GM12878 (cell line): ENCODE measurements at regions of chr4 and their contacts with region 1.

Region 1: GRCh38 chr4:15756361-15756861 is 21.7 kb upstream of the CD38 start:
- DNase-seq: peak; percentile 66
- ATAC-seq: peak; percentile 95
- H3K4me3 ChIP-seq: 0 out of 2 replicates have a peak overlapping the region, but pooled peaks have one; percentile 18
- H3K27ac ChIP-seq: no peak overlapping the region
- H3K4me1 ChIP-seq: peaks cover 18% of the 10 kb centered on the region
- H3K27me3 ChIP-seq: no peaks in the 10 kb centered on the region
- CTCF ChIP-seq: peak; percentile 35 to 67 (median 58); a peak in 5 of 6 replicates
- EP300 ChIP-seq: no peak
- POLR2A ChIP-seq: no peak
- RAD21 ChIP-seq: 0 out of 2 replicates have a peak, but pooled peaks have one; percentile 9

Region 2: DNA sequence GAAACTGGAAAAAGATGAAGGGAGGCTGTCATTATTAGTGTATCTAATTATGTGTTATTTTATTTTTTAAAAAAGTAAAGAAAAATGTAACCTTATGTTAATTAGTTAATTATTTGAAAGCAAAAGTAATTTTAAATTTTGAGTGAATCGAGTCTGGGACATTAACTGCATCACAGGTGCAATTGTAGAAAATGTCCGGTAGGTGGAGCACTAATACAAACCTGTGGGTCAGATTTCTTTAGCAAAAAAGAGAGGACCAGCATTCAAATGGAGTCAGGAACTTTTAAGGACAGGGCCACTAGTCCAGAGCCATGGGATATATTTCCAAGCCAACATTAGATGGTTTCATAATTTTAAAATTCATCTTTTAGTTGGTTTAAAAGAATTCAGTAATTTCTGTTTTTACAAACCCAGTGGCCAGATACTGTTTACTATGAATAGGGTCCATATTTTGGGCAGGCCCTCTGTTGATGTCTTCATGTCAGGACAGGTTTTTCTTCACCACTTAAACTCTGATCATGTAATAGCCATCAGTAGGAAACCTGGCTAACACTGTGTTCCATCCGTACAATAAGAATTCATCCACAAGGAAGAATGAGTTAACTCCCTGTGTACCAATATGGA is 26.4 kb before region 1 on chr4:
- CTCF ChIA-PET with region 1: interaction called, 22 read pairs
- POLR2A ChIA-PET with region 1: no interaction called
- RAD21 ChIA-PET with region 1: interaction called, 3 read pairs
- SMC1A ChIA-PET with region 1: interaction called, 7 read pairs
- in situ Hi-C with region 1: no loop called
- intact Hi-C with region 1: no loop called
- DNase-seq: peak; percentile 2
- ATAC-seq: peak; percentile 84
- H3K4me3 ChIP-seq: no peak overlapping the region
- H3K27ac ChIP-seq: no peak overlapping the region
- H3K4me1 ChIP-seq: no peaks in the 10 kb centered on the region
- H3K27me3 ChIP-seq: no peaks in the 10 kb centered on the region; a peak in 1 of 4 replicates
- CTCF ChIP-seq: peak; percentile 69 to 77 (median 74)
- EP300 ChIP-seq: no peak
- POLR2A ChIP-seq: no peak
- RAD21 ChIP-seq: peak; percentile 92

Region 3: DNA sequence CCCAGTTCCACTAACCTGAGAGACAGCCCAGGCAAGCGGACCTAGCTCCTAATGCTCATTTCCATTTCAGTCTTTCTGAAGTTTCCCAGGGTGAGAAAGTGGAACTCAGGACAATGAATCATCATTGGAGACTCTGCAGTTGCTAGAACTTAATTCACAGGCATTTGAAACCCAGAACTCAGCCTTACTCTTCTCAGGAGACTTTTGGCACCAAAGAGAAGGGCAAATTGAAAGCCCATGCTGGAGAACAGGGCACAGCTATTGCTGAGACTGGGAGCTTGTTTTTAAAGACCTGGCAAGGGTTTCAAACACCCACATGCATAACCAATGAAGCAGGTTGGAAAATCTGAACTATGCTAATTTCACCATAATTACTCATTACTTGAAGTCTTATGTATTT is 17.5 kb before region 1 on chr4:
- CTCF ChIA-PET with region 1: interaction called, 33 read pairs
- POLR2A ChIA-PET with region 1: no interaction called
- RAD21 ChIA-PET with region 1: interaction called, 16 read pairs
- SMC1A ChIA-PET with region 1: interaction called, 29 read pairs
- in situ Hi-C with region 1: no loop called
- intact Hi-C with region 1: no loop called
- DNase-seq: no peak
- ATAC-seq: no peak
- H3K4me3 ChIP-seq: no peak overlapping the region
- H3K27ac ChIP-seq: no peak overlapping the region
- H3K4me1 ChIP-seq: no peaks in the 10 kb centered on the region
- H3K27me3 ChIP-seq: no peaks in the 10 kb centered on the region; a peak in 1 of 4 replicates
- CTCF ChIP-seq: no peak
- EP300 ChIP-seq: no peak
- POLR2A ChIP-seq: no peak
- RAD21 ChIP-seq: no peak

Region 4: GRCh38 chr4:15771216-15772058 is 15.0 kb after region 1 on chr4:
- CTCF ChIA-PET with region 1: interaction called, 34 read pairs
- POLR2A ChIA-PET with region 1: interaction called, 19 read pairs
- RAD21 ChIA-PET with region 1: interaction called, 30 read pairs
- SMC1A ChIA-PET with region 1: interaction called, 83 read pairs
- in situ Hi-C with region 1: no loop called
- intact Hi-C with region 1: no loop called
- DNase-seq: peak; percentile 65
- ATAC-seq: peak; percentile 90
- H3K4me3 ChIP-seq: peak overlapping the region; percentile 30; the same call in 1 of the 2 replicates
- H3K27ac ChIP-seq: peak overlapping the region; percentile 48
- H3K4me1 ChIP-seq: peaks cover 37% of the 10 kb centered on the region
- H3K27me3 ChIP-seq: peaks cover 0 to 3% of the 10 kb centered on the region in 2 experiments; a peak in 1 of 4 replicates
- CTCF ChIP-seq: no peak
- EP300 ChIP-seq: peak; percentile 70 to 74; a peak in 2 of 4 replicates
- POLR2A ChIP-seq: no peak
- RAD21 ChIP-seq: no peak

Region 5: DNA sequence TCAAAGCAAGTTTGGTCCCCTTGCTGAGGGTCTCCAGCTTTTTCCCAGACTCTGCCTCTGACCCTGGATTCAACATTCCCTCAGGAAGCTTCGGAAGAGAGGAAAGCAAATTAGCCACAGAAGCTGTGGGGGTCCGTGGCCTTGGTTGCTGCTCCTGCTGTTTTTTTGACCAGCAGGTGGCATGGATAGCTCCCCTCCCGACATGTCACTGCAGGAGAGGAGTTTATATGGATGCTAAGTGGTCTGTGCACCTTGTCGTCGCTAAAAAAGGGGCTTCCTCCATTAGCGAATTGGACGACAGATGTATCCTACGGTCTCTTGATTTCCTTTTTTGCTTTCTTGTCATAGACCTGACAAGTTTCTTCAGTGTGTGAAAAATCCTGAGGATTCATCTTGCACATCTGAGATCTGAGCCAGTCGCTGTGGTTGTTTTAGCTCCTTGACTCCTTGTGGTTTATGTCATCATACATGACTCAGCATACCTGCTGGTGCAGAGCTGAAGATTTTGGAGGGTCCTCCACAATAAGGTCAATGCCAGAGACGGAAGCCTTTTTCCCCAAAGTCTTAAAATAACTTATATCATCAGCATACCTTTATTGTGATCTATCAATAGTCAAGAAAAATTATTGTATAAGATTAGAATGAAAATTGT is 91.9 kb after region 1 on chr4:
- CTCF ChIA-PET with region 1: no interaction called
- POLR2A ChIA-PET with region 1: no interaction called
- RAD21 ChIA-PET with region 1: no interaction called
- SMC1A ChIA-PET with region 1: no interaction called
- in situ Hi-C with region 1: no loop called
- intact Hi-C with region 1: no loop called
- DNase-seq: no peak
- ATAC-seq: no peak
- H3K4me3 ChIP-seq: no peak overlapping the region
- H3K27ac ChIP-seq: no peak overlapping the region
- H3K4me1 ChIP-seq: no peaks in the 10 kb centered on the region
- H3K27me3 ChIP-seq: no peaks in the 10 kb centered on the region
- CTCF ChIP-seq: no peak
- EP300 ChIP-seq: no peak
- POLR2A ChIP-seq: no peak
- RAD21 ChIP-seq: no peak

Region 6: GRCh38 chr4:16302619-16303018 is 546.2 kb after region 1 on chr4:
- CTCF ChIA-PET with region 1: no interaction called
- POLR2A ChIA-PET with region 1: no interaction called
- RAD21 ChIA-PET with region 1: no interaction called
- SMC1A ChIA-PET with region 1: no interaction called
- in situ Hi-C with region 1: no loop called
- intact Hi-C with region 1: no loop called
- DNase-seq: no peak
- ATAC-seq: no peak
- H3K4me3 ChIP-seq: no peak overlapping the region
- H3K27ac ChIP-seq: no peak overlapping the region
- H3K4me1 ChIP-seq: no peaks in the 10 kb centered on the region
- H3K27me3 ChIP-seq: no peaks in the 10 kb centered on the region
- CTCF ChIP-seq: no peak
- EP300 ChIP-seq: no peak
- POLR2A ChIP-seq: no peak
- RAD21 ChIP-seq: no peak